ENCODE measurements at regions of chr6 and their contacts with region 1.

Region 1: GRCh38 chr6:113953346-113953745 is 17.6 kb downstream of the HDAC2 start:
- DNase-seq: no peak
- H3K4me3 ChIP-seq: no peak overlapping the region
- H3K27ac ChIP-seq: no peak overlapping the region
- H3K4me1 ChIP-seq: peaks cover 11% of the 10 kb centered on the region
- H3K27me3 ChIP-seq: no peaks in the 10 kb centered on the region
- CTCF ChIP-seq: no peak
- POLR2A ChIP-seq: no peak

Region 2: GRCh38 chr6:113936093-113936934 is 17.0 kb before region 1 on chr6:
- CTCF ChIA-PET with region 1: interaction called, 10 read pairs
- POLR2A ChIA-PET with region 1: no interaction called
- dilution Hi-C with region 1: no loop called
- intact Hi-C with region 1: no loop called
- DNase-seq: peak; percentile 86
- H3K4me3 ChIP-seq: no peak overlapping the region
- H3K27ac ChIP-seq: no peak overlapping the region
- H3K4me1 ChIP-seq: no peaks in the 10 kb centered on the region
- H3K27me3 ChIP-seq: no peaks in the 10 kb centered on the region
- CTCF ChIP-seq: peak; percentile 52
- POLR2A ChIP-seq: no peak

Measured in endothelial cell of umbilical vein (primary cell).